Psoas muscle (tissue), 8 donors: ENCODE measurements at regions of chr5 and their contacts with region 1.

Region 1: DNA sequence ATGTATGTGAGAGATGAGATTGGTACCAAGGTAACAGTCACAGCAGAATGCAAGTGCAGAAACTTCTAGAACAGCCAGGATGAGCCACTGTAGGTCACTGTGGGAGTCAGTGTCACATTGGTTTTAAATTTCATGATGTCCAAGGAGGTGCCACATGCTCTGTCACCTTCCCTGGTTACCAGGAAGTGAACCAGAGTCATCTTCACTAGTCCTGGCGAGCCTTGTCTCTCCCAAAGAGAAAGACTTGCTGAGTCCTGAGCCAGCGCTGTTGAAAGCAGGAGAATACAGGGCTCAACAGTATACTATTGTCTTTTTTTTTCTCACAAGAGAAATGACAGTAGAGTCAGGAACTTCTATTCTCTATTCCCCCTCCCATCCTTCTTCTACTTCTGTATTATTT is 615.5 kb downstream of the RAB3C start:
- DNase-seq: peak in 1 of 2 donors; percentile 21
- ATAC-seq: peak; percentile 72 to 80 (median 78)
- H3K4me3 ChIP-seq: no peak overlapping the region
- H3K27ac ChIP-seq: peak overlapping the region; percentile 76
- H3K4me1 ChIP-seq: peaks cover 27% of the 10 kb centered on the region
- H3K27me3 ChIP-seq: no peaks in the 10 kb centered on the region
- CTCF ChIP-seq: no peak

Region 2: DNA sequence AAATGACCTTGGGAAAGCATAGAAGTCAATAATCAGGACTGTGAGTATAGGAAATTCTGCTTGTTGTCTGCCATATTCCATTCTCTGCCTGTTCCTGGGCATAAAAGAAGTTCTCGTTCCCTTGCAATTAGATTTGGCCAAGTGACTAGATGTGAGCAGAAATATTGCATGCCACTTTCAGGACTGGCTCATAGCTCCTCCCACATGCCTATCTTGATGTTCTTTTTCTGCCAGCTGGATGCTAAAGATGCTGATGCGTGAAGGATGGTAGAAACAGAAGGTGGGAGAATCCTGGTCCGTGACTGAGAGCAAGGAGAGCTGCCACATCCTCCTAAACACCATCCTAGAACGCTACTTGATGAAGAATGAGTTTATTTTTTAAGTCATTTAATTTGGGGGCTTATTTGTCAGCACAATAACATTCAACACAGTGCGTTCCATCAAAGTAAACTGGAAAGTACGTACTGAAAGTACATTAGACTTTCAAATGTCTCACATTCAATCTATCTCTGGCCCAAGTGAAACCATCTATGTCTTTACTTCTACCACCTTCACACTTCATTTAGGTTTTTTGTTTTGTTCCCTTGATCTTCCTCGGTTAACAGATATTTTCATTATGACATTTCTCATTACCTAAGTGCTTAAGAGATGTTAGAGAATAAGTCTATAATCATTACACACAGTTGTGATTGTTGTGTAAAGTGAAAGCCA is 33.0 kb after region 1 on chr5:
- intact Hi-C with region 1: loop called in 1 of 2 experiments (anchors 5 kb)
- DNase-seq: no peak
- ATAC-seq: peak in 3 of 4 donors; percentile 28 to 54 (median 39)
- H3K4me3 ChIP-seq: no peak overlapping the region
- H3K27ac ChIP-seq: peak overlapping the region; percentile 42
- H3K4me1 ChIP-seq: peaks cover 35% of the 10 kb centered on the region
- H3K27me3 ChIP-seq: no peaks in the 10 kb centered on the region
- CTCF ChIP-seq: no peak